ENCODE measurements at regions of chr10 and their contacts with region 1.

Region 1: GRCh38 chr10:26881600-26882331 is 21.0 kb upstream of the ABI1 start:
- DNase-seq: no peak
- H3K4me3 ChIP-seq: no peak overlapping the region
- H3K27ac ChIP-seq: no peak overlapping the region
- H3K4me1 ChIP-seq: peaks cover 0 to 4% of the 10 kb centered on the region in 2 donors
- H3K27me3 ChIP-seq: no peaks in the 10 kb centered on the region
- CTCF ChIP-seq: peak; percentile 41 to 62 (median 61)

Region 2: DNA sequence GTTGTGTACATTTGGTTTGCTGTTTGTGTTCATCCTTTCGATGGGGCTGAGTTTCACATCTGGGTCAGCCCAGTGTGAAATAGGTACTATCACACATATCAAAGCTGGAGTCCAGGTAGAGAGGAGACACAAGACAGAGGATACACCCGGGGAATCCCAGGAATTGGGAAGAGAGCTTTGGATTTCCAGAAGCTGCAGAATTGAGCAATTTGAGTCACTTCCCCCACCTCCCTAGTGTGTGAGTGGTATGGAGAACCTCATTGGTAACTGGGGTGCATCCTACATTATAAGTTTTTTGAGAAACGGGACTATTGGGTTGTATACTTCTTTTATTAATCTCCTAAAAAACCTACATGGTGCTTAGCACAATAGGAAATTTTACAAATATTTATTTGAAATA is 196.3 kb before region 1 on chr10:
- intact Hi-C with region 1: loop called (anchors 2 kb)
- DNase-seq: no peak
- H3K4me3 ChIP-seq: no peak overlapping the region
- H3K27ac ChIP-seq: no peak overlapping the region
- H3K4me1 ChIP-seq: no peaks in the 10 kb centered on the region
- H3K27me3 ChIP-seq: no peaks in the 10 kb centered on the region
- CTCF ChIP-seq: no peak

Region 3: DNA sequence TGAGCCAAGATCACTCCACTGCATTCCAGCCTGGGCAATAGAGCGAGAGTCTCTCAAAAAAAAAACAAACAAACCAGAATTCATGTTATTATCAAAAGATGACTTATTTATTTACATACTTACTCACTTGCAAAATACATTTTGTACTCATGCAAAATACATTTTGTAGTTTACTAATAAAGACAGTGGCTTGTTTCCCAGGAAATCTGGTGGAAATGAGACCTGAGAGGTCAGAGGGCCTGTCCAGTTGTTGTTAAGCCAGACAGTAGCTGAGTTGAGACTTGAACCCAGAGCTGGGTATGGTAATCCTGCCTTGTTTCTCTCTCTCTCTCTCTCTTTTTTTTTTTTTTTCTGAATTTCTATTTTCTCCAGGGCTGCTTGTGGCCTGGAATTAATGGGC is 154.8 kb before region 1 on chr10:
- intact Hi-C with region 1: loop called (anchors 1 kb)
- DNase-seq: no peak
- H3K4me3 ChIP-seq: no peak overlapping the region
- H3K27ac ChIP-seq: no peak overlapping the region
- H3K4me1 ChIP-seq: no peaks in the 10 kb centered on the region
- H3K27me3 ChIP-seq: no peaks in the 10 kb centered on the region
- CTCF ChIP-seq: no peak